Lower leg skin (tissue), 4 donors: ENCODE measurements at regions of chr2 and their contacts with region 1.

Region 1: GRCh38 chr2:145939949-145940348 is 1420.0 kb upstream of the ZEB2 start:
- DNase-seq: no peak
- H3K4me3 ChIP-seq: no peak overlapping the region
- CTCF ChIP-seq: no peak
- POLR2A ChIP-seq: no peak

Region 2: GRCh38 chr2:145822892-145823534 is 116.9 kb before region 1 on chr2:
- intact Hi-C with region 1: no loop called
- DNase-seq: no peak
- H3K4me3 ChIP-seq: no peak overlapping the region
- CTCF ChIP-seq: no peak
- POLR2A ChIP-seq: no peak

Region 3: GRCh38 chr2:145887915-145888314 is 52.0 kb before region 1 on chr2:
- intact Hi-C with region 1: loop called (anchors 2 kb)
- DNase-seq: no peak
- H3K4me3 ChIP-seq: no peak overlapping the region
- CTCF ChIP-seq: no peak
- POLR2A ChIP-seq: no peak